ENCODE measurements at regions of chr10 and their contacts with region 1.

Region 1: DNA sequence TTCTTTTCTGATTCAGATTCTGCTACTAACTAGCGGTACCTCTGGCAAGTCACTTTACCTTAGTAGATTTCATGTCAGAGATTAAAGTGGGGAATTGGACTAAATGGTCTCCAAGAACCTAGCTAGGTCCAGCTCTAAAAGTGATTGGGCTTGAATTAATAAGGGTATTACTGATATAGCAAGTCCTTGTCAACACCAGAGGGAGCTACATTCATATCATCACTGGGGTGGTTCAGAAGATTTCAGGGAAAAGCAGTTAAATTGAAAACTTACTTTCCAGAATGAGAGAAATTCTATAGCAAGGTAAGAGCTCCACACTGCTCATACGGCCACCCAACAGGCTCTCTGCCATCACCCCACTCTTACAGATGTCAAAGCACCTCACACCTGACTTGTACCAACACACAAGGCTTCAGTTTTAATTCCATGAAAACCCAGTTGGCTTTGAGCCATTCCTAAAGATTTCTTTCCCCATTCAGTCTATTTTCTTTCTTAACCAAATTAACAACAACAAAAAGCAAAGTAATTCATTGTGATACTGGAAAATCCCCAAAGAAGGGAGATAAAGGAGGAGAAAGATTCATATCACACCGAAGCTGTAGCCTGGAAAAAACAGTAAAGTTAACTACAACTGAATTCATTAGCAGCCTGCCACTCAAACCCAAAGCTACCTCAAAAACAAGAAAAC is 38.0 kb upstream of the SPOCK2 start:
- DNase-seq: peak in 2 of 9 experiments; percentile 43 to 57
- ATAC-seq: no peak
- H3K4me3 ChIP-seq: no peak overlapping the region
- H3K4me3 Mint-ChIP-seq: no peak overlapping the region
- H3K27ac ChIP-seq: no peak overlapping the region
- H3K27ac Mint-ChIP-seq: no peak overlapping the region
- H3K4me1 ChIP-seq: peaks cover 12% of the 10 kb centered on the region
- H3K4me1 Mint-ChIP-seq: peaks cover 29% of the 10 kb centered on the region
- H3K27me3 ChIP-seq: no peaks in the 10 kb centered on the region
- H3K27me3 Mint-ChIP-seq: no peaks in the 10 kb centered on the region
- CTCF ChIP-seq: no peak

Region 2: DNA sequence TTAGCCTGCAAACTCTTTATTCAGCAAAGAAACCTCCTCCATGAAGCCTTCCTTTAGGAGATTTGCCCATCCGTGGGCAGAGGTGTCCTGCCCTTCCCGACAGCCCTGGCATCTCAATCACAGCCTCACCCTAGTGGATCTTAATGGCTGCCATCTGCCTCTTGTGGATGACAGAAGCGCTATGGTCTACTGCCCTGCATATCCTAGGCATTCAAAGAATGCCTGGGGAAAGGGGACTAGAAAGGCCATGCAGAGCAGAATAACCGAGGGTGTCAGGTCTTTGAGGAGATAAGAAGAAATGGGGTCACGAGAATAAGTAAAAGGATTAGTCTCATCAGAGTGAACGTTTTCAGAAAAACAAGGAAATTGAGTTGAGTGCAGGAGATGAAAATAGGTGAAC is 19.7 kb after region 1 on chr10:
- CTCF ChIA-PET with region 1: interaction called, 4 read pairs
- POLR2A ChIA-PET with region 1: no interaction called
- intact Hi-C with region 1: loop called in 1 of 2 experiments (anchors 2 kb)
- DNase-seq: no peak
- ATAC-seq: no peak
- H3K4me3 ChIP-seq: no peak overlapping the region
- H3K4me3 Mint-ChIP-seq: no peak overlapping the region
- H3K27ac ChIP-seq: no peak overlapping the region
- H3K27ac Mint-ChIP-seq: no peak overlapping the region
- H3K4me1 ChIP-seq: no peaks in the 10 kb centered on the region
- H3K4me1 Mint-ChIP-seq: no peaks in the 10 kb centered on the region
- H3K27me3 ChIP-seq: no peaks in the 10 kb centered on the region
- H3K27me3 Mint-ChIP-seq: no peaks in the 10 kb centered on the region
- CTCF ChIP-seq: no peak

Measured in CD8-positive, alpha-beta T cell (primary cell).